ENCODE measurements at regions of chr18 and their contacts with region 1.

Region 1: GRCh38 chr18:27599202-27599829 is 414.2 kb upstream of the CHST9 start:
- DNase-seq: no peak

Region 2: GRCh38 chr18:27314996-27315395 is 284.3 kb before region 1 on chr18:
- intact Hi-C with region 1: loop called in 1 of 2 experiments (anchors 5 kb)
- DNase-seq: no peak

Region 3: GRCh38 chr18:27645929-27646328 is 46.6 kb after region 1 on chr18:
- intact Hi-C with region 1: no loop called
- DNase-seq: no peak

Region 4: DNA sequence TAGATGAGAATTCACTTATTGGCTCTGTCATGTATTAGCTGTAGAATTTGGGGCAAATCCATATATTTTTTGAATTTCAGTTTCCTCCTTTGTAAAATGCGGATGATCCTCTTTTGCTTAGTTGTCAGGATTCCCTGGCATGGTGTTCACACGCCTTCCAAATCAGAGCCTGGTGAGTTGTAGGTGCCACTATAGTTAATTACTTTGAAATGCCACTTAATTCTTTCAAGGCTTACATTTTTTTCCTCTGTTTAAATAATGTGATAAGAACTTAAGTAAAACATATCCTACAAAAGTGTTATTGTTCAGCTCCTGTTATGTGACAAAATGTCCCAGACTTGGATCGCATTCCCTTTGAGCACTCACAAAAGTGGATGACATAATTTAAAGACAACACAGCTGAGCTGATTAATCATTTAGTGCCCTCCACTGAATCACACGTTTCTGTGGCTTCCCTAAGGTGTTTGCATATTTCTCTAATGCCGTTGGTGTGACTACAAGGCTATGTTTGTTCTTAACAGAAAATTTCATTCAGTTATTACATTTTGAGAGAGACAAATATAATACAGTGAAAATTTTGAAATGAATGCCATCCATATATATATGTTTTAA is 57.0 kb after region 1 on chr18:
- intact Hi-C with region 1: no loop called
- DNase-seq: no peak